Psoas muscle (tissue), 8 donors: ENCODE measurements at regions of chr2 and their contacts with region 1.

Region 1: DNA sequence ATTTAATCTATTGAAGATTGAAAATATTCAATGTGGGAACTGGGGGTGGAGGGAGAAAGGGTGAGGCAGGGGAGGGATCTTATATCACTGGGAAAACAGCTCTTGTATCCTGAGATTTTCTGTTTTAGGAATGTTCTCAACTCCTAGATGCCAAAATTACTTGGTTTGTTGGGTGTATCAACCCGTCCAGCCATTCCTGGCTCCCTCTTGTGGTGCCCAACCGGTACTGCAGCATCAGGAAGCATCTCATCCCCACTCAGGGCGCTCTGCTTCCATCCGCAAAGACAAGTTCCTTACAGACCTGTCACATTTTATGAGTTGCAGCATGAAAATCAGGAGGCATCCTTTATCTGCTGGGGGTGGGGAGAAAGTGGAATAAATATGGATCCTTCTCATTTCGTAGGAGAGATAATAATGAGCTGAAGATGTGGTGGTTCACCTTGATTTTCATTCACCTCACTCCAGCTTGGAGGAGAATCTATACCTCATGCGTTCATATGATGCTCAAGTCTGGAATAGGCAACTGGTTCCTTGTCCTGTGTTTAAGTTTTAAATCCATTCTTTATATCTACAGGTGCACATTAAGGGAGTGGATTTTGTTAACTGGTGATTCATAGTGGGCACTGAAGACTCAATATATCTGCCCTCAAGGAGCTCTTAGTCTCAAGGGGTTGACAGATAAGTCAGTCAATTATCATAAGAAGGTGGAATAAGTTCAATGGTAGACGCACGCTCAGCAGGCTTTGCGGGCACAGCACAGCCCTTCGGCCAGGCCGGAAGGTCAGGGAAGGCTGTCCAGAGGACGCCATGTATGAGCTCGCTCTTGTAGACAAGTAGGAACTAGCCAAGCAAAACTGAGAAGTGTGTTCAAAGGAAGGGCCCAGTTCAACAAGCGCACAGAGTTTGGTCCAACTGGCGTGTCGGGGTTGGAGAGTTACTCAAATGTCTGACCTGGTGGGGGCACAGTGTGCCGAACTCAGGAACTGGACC is 127.3 kb downstream of the RNF144A start:
- DNase-seq: peak; percentile 69 to 83
- ATAC-seq: peak; percentile 83 to 93 (median 84)
- H3K4me3 ChIP-seq: no peak overlapping the region
- H3K27ac ChIP-seq: no peak overlapping the region
- H3K4me1 ChIP-seq: no peaks in the 10 kb centered on the region
- H3K27me3 ChIP-seq: no peaks in the 10 kb centered on the region
- CTCF ChIP-seq: peak; percentile 99

Region 2: DNA sequence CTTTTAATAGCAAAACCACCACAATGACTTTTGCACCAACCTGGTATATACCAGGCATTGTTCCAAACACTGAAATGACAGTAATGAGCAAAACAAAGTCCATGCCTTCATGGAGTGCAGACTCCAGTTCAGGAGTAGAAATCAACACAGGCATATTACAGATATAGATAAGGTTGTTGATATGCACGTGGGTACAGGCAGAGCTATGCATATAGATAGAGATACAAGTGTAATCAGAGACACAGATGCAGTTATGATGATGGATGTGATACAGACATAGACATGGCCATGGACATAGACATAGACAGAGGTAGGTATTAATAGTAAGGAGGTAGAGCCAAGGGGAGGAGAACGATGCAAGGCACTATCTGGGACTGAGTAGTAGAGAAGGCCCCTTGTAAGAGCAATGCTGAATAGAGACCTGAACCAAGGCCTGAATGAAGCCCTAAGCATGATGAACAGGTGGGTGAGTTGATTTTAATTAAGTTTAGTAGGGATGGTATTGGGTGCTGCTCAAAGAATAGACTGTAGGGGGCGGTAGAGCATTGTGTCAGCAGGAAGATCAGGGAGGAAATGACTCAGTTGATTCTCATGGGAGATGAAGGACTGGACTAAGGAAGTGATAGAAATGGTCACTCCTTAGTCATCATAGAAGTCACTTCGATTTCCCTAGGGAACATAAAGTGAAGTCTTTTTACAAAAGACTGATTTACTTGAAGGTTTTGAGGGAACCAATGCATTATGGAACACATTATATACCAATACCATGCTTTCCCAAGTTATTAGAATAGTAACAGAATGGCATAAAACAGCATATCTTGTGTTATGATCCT is 218.3 kb before region 1 on chr2:
- intact Hi-C with region 1: loop called in 1 of 2 experiments (anchors 2 kb)
- DNase-seq: no peak
- ATAC-seq: peak; percentile 61 to 86 (median 76)
- H3K4me3 ChIP-seq: no peak overlapping the region
- H3K27ac ChIP-seq: no peak overlapping the region
- H3K4me1 ChIP-seq: no peaks in the 10 kb centered on the region
- H3K27me3 ChIP-seq: no peaks in the 10 kb centered on the region
- CTCF ChIP-seq: peak; percentile 52

Region 3: GRCh38 chr2:6896930-6897759 is 147.4 kb before region 1 on chr2:
- intact Hi-C with region 1: loop called (anchors 1 to 2 kb)
- DNase-seq: no peak
- ATAC-seq: peak in 2 of 4 donors; percentile 58 to 83
- H3K4me3 ChIP-seq: no peak overlapping the region
- H3K27ac ChIP-seq: no peak overlapping the region
- H3K4me1 ChIP-seq: no peaks in the 10 kb centered on the region
- H3K27me3 ChIP-seq: no peaks in the 10 kb centered on the region
- CTCF ChIP-seq: peak; percentile 81

Region 4: GRCh38 chr2:7510350-7510749 is 465.8 kb after region 1 on chr2:
- intact Hi-C with region 1: no loop called
- DNase-seq: no peak
- ATAC-seq: no peak
- H3K4me3 ChIP-seq: no peak overlapping the region
- H3K27ac ChIP-seq: no peak overlapping the region
- H3K4me1 ChIP-seq: no peaks in the 10 kb centered on the region
- H3K27me3 ChIP-seq: no peaks in the 10 kb centered on the region
- CTCF ChIP-seq: no peak